GM12878 (cell line): ENCODE measurements at regions of chr6 and their contacts with region 1.

Region 1: DNA sequence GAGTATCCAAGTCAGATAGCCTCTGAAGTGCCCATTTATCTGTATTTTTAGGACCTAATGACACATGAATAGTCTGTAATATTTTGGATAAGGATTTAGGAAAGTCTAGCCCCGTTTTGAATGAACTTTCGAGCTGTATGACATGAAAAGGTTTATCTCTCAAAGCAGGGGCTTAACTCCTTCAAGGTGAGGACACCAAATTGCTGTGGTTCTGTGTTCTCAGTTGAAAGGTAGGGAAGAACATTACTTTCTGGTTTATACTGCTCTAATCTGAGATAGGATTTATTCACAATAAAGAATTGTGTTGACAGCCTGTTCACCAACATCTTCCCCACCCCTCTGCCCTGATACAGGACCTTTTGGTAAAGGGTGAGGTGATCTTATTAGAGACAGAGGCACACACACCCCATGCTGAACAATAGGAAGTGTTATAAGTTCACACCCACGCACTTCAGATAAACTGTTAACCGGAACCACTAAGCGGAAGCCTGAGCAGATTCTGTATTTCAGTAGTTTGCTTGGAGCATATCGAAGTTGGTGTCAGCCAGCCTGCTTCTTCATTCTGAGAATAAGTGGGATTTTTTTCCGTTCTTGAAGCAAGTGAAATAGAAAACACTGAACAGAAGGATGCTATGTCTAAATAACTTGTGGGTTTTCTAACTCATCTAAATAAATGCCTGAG is 223.3 kb downstream of the TMEM242 start:
- DNase-seq: peak; percentile 71
- ATAC-seq: peak; percentile 98
- H3K4me3 ChIP-seq: no peak overlapping the region
- H3K27ac ChIP-seq: no peak overlapping the region
- H3K4me1 ChIP-seq: peaks cover 14% of the 10 kb centered on the region; the same call in 1 of the 2 replicates
- H3K27me3 ChIP-seq: no peaks in the 10 kb centered on the region
- CTCF ChIP-seq: no peak
- EP300 ChIP-seq: no peak
- POLR2A ChIP-seq: no peak
- RAD21 ChIP-seq: no peak

Region 2: DNA sequence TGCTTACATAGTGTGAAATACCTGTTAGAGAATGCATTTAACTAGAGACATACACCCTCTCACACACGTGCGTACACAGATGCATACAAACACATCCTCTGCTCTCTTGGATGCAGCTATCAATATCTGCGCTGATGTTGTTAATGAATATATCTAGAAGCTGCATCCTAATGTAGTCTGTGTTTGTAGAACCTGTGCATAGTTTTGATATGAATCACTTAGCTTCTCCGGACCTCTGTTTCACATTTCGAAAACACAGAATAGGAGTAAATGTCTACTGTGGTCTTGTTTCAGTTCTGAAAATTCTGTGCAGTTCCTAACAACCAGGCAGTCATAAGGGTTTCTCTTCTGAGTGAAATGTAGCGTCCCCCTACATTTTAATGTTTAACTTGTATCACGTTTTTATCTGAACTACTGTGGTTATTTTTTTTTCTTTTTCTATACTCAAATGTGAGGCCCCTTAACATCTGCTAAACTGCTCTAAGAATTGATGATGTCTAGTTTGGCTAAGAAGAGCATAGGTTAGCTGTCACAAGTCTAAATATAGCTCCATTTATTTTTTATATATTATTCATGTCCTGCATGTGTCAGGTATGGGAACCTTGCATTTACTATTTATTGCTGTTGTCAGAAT is 31.2 kb before region 1 on chr6:
- CTCF ChIA-PET with region 1: interaction called, 6 read pairs
- POLR2A ChIA-PET with region 1: no interaction called
- RAD21 ChIA-PET with region 1: no interaction called
- SMC1A ChIA-PET with region 1: interaction called, 7 read pairs
- in situ Hi-C with region 1: no loop called
- intact Hi-C with region 1: loop called (anchors 5 kb)
- DNase-seq: peak; percentile 89
- ATAC-seq: peak; percentile 98
- H3K4me3 ChIP-seq: no peak overlapping the region
- H3K27ac ChIP-seq: peak overlapping the region; percentile 22; the same call in 1 of the 2 replicates
- H3K4me1 ChIP-seq: peaks cover 19% of the 10 kb centered on the region
- H3K27me3 ChIP-seq: no peaks in the 10 kb centered on the region
- CTCF ChIP-seq: no peak
- EP300 ChIP-seq: peak; percentile 64 to 77; a peak in 2 of 4 replicates
- POLR2A ChIP-seq: no peak
- RAD21 ChIP-seq: peak; percentile 20; the same call in 1 of the 2 replicates